Activated T-helper 2 cell treated with anti-CD3 and anti-CD28 coated beads, Interferon-gamma antibody, Interleukin-2, Interleukin-4, amounts not matched to agents 10 μg/mL and 5 μg/mL and 100 μg/mL, durations not matched to agents 14 hours and 24 hours and 36 hours (primary cell): ENCODE measurements at regions of chr10 and their contacts with region 1.

Region 1: DNA sequence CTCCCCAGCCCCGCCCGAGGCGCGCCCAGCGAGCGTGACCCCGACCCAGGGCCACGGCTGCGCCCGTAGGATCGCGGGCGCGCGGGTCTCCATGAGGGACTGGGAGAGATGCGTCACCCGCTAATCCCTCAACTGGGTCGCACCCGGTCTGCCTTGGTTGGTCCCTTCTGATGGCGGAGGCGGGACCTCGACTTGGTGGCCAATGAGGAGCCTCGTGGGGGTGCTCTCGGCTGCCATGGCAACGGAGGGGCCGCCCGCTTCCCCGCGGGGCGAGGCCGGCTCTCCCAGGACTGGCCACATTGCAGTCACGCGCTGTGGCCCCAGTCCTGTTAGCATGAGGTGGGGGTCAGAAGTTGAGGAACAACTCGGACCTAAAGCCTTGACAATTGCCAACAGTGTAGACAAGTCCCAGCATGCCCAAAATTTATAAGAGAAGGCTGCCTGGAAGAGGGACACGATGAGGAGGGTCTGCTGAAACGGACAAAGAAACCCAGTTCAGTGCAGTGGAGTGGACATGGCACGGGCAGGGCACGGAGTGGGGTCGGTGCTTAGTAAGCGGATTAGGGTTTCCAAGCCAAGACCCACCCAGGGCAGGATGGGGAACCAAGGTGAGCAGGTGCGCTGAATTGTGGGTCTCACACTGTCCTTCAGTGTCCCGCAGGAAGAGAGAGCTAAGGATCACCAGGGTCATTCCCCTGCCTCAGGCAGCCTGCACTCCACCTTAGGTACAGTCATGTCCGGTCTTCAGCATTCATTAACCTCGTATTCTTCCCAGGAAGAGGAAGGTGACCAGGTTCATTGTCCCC is 24.4 kb downstream of the DDIT4 start:
- DNase-seq: peak; percentile 91
- H3K4me3 Mint-ChIP-seq: peak overlapping the region; percentile 76
- H3K27ac Mint-ChIP-seq: peak overlapping the region; percentile 98
- H3K4me1 Mint-ChIP-seq: peaks cover 50% of the 10 kb centered on the region
- H3K27me3 Mint-ChIP-seq: no peaks in the 10 kb centered on the region

Region 2: DNA sequence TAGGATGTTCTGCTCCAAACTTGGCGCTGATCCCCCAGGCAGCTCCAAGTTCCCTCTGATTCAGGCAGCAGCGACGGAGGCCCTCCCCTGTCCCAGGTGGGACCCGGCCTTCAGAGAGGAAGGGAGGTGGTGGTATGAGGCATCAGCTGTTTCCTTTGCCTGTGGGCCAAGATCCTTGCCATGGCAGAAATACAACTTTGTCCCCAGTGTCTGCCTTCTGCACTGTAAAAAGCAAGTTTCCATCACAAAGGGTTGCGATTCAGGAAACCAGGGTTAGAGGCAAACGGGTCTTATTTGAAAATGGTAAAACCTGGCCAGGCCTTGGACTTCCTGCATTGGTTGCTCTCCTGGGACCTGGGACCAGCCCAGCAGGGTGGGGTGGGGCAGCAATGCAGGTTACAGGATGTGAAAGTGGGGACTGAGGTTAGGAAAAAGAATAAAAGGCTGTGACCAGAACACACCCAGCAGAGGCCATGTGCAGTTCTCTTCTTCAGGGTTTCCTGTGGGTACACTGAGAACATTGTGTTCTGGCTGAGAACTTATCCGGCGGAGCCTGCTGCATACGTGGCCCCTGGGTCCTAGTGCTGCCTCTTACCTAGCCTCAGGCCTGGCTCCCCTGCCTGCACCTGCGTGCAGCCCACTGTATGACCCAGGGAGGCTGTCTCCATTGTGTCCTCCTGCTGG is 49.6 kb before region 1 on chr10:
- intact Hi-C with region 1: loop called (anchors 1 kb)
- DNase-seq: peak; percentile 80
- H3K4me3 Mint-ChIP-seq: peak overlapping the region; percentile 69
- H3K27ac Mint-ChIP-seq: peak overlapping the region; percentile 97
- H3K4me1 Mint-ChIP-seq: peaks cover 64% of the 10 kb centered on the region
- H3K27me3 Mint-ChIP-seq: no peaks in the 10 kb centered on the region

Region 3: GRCh38 chr10:72273410-72274212 is 24.6 kb before region 1 on chr10 and contains the start of gene DDIT4:
- intact Hi-C with region 1: loop called (anchors 1 kb)
- DNase-seq: peak; percentile 99
- H3K4me3 Mint-ChIP-seq: peak within 1 kb of the TSS; percentile 100
- H3K27ac Mint-ChIP-seq: peak within 1 kb of the TSS; percentile 94
- H3K4me1 Mint-ChIP-seq: peaks cover 43% of the 10 kb centered on the region
- H3K27me3 Mint-ChIP-seq: no peaks in the 10 kb centered on the region
- total RNA-seq, gene DDIT4: 543 and 569 TPM in 2 replicates

Region 4: GRCh38 chr10:72285972-72286521 is 12.1 kb before region 1 on chr10:
- intact Hi-C with region 1: no loop called
- DNase-seq: no peak
- H3K4me3 Mint-ChIP-seq: no peak overlapping the region
- H3K27ac Mint-ChIP-seq: peak overlapping the region; percentile 43
- H3K4me1 Mint-ChIP-seq: peaks cover 30% of the 10 kb centered on the region
- H3K27me3 Mint-ChIP-seq: no peaks in the 10 kb centered on the region

Region 5: DNA sequence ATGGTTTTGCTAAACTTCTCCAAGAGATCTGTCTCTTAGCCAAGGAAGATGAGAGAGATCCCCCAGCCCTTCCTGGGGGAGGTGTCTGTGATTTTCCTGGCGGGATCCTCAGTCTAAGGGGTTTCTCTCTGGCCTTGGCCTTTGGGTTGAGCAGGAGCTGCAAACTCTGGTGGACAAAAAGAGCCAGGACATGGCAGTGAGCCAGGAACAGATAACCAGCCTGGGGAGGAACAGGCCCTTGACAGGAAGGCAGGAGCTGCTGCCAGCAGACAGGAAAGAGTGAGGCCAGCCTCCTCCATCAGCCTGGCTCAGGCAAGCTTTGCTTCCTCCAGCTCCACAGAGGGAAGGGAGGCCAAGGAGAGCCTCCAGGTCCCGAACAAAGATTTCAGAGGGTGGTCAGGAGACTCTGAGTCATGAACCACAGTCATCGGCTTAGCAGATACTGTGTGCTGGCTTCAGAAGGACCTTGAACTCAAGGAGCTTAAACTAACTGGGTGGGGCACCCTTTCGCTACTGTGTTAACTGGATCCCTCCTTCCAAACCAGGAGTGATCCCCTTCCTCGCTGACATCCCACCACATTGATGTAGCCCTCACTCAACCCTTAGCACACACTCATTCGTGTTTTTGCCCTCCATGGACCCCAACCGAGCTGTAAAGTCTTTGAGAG is 10.3 kb after region 1 on chr10:
- intact Hi-C with region 1: loop called (anchors 1 kb)
- DNase-seq: no peak
- H3K4me3 Mint-ChIP-seq: no peak overlapping the region
- H3K27ac Mint-ChIP-seq: peak overlapping the region; percentile 86
- H3K4me1 Mint-ChIP-seq: peaks cover 58% of the 10 kb centered on the region
- H3K27me3 Mint-ChIP-seq: no peaks in the 10 kb centered on the region

Region 6: DNA sequence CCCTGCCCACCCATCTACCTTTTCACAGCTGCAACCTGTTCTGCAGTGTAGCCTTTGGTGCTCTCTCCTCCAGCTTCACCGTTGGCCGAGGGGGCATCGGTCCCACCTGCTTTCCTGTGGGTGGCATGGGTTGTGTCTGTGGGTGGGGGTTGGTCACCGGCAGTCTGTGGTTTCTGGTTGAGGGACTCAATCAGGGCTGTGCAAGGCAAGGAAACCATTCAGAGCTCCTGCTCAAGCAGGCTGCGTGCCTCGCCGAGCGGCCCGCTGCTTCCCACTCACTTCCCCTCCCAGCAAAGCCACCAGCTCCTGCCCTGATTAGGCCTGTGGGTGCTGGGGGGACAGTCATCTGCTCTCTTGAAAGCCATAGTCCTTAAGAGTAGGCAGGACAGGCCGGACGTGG is 46.8 kb after region 1 on chr10:
- intact Hi-C with region 1: no loop called
- DNase-seq: no peak
- H3K4me3 Mint-ChIP-seq: no peak overlapping the region
- H3K27ac Mint-ChIP-seq: no peak overlapping the region
- H3K4me1 Mint-ChIP-seq: peaks cover 16% of the 10 kb centered on the region
- H3K27me3 Mint-ChIP-seq: no peaks in the 10 kb centered on the region

Region 7: GRCh38 chr10:72649291-72649690 is 351.1 kb after region 1 on chr10:
- intact Hi-C with region 1: no loop called
- DNase-seq: no peak
- H3K4me3 Mint-ChIP-seq: no peak overlapping the region
- H3K27ac Mint-ChIP-seq: no peak overlapping the region
- H3K4me1 Mint-ChIP-seq: no peaks in the 10 kb centered on the region
- H3K27me3 Mint-ChIP-seq: peaks cover 11% of the 10 kb centered on the region